Panc1 (cell line): ENCODE measurements at regions of chr5 and their contacts with region 1.

Region 1: GRCh38 chr5:74766849-74767578 is at the starts of genes GFM2 and NSA2:
- DNase-seq: peak; percentile 88
- ATAC-seq: peak; percentile 93
- H3K4me3 ChIP-seq: peak within 1 kb of the TSS; percentile 99 to 100
- H3K27ac ChIP-seq: peak within 1 kb of the TSS; percentile 98
- H3K4me1 ChIP-seq: peaks cover 25% of the 10 kb centered on the region
- H3K27me3 ChIP-seq: no peaks in the 10 kb centered on the region
- CTCF ChIP-seq: no peak
- total RNA-seq, gene GFM2: 22.5 TPM
- total RNA-seq, gene NSA2: 42.7 TPM

Region 2: DNA sequence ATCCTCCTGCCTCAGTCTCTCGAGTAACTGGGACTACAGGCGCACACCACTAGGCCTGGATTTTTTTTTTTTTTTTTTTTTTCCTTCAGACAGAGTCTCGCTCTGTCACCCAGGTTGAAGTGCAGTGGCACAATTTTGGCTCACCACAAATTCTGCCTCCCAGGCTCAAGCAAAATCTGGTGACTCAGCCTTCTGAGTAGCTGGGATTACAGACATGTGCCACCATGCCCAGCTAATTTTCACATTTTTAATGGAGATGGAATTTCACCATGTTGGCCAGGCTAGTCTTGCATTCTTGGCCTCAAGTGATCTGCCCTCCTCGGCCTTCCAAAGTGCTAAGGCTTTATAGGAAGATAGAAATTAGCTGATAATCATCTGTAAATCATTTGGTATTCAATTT is 43.9 kb after region 1 on chr5:
- CTCF ChIA-PET with region 1: no interaction called
- POLR2A ChIA-PET with region 1: no interaction called
- in situ Hi-C with region 1: no loop called
- intact Hi-C with region 1: no loop called
- DNase-seq: no peak
- ATAC-seq: no peak
- H3K4me3 ChIP-seq: no peak overlapping the region
- H3K27ac ChIP-seq: no peak overlapping the region
- H3K4me1 ChIP-seq: no peaks in the 10 kb centered on the region
- H3K27me3 ChIP-seq: no peaks in the 10 kb centered on the region
- CTCF ChIP-seq: no peak

Region 3: DNA sequence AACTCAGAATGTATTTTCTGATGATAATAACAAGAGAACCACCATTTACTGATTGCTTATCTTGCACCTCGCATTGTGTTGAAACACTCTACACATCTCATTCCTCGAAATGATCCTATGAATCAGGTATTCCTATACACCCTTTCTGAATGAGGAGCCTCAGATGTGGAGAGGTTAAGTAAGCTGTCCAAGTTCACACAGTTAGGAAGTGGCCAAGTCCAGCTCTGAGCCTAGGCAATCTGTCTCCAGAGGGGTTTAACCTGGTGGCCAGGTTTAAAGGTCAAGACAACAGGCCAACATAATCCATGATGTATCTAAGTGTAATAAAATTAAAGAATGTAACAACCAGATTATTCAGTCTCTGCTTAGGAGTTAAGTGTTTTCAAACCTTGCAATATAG is 86.2 kb after region 1 on chr5:
- CTCF ChIA-PET with region 1: no interaction called
- POLR2A ChIA-PET with region 1: interaction called, 14 read pairs
- in situ Hi-C with region 1: no loop called
- intact Hi-C with region 1: no loop called
- DNase-seq: no peak
- ATAC-seq: no peak
- H3K4me3 ChIP-seq: no peak overlapping the region
- H3K27ac ChIP-seq: no peak overlapping the region
- H3K4me1 ChIP-seq: peaks cover 19% of the 10 kb centered on the region
- H3K27me3 ChIP-seq: no peaks in the 10 kb centered on the region
- CTCF ChIP-seq: no peak